CD4-positive, alpha-beta memory T cell (primary cell): ENCODE measurements at regions of chr21 and their contacts with region 1.

Region 1: GRCh38 chr21:36260030-36260787 is 59.8 kb upstream of the MORC3 start:
- DNase-seq: peak; percentile 58 to 72 (median 67)
- H3K4me3 ChIP-seq: peak overlapping the region; percentile 30 to 61
- H3K4me3 Mint-ChIP-seq: peak overlapping the region; percentile 76 to 87 (median 86)
- H3K27ac ChIP-seq: peak overlapping the region; percentile 44
- H3K27ac Mint-ChIP-seq: peak overlapping the region; percentile 57 to 95 (median 90)
- H3K4me1 ChIP-seq: peaks cover 12% of the 10 kb centered on the region
- H3K4me1 Mint-ChIP-seq: peaks cover 10 to 17% (median 15%) of the 10 kb centered on the region in 4 donors
- H3K27me3 ChIP-seq: no peaks in the 10 kb centered on the region
- H3K27me3 Mint-ChIP-seq: no peaks in the 10 kb centered on the region

Region 2: GRCh38 chr21:36288651-36289243 is 28.5 kb after region 1 on chr21:
- CTCF ChIA-PET with region 1: interaction called, 19 read pairs
- POLR2A ChIA-PET with region 1: interaction called, 6 read pairs
- intact Hi-C with region 1: loop called (anchors 1 kb)
- DNase-seq: peak in 4 of 5 donors; percentile 59 to 72 (median 62)
- H3K4me3 ChIP-seq: peak overlapping the region in 1 of 2 donors; percentile 11
- H3K4me3 Mint-ChIP-seq: peak overlapping the region; percentile 65 to 89 (median 80)
- H3K27ac ChIP-seq: peak overlapping the region; percentile 77
- H3K27ac Mint-ChIP-seq: peak overlapping the region; percentile 95 to 99 (median 96)
- H3K4me1 ChIP-seq: peaks cover 26% of the 10 kb centered on the region
- H3K4me1 Mint-ChIP-seq: peaks cover 18 to 29% (median 24%) of the 10 kb centered on the region in 4 donors
- H3K27me3 ChIP-seq: no peaks in the 10 kb centered on the region
- H3K27me3 Mint-ChIP-seq: peaks cover 0 to 1% of the 10 kb centered on the region in 2 donors

Region 3: DNA sequence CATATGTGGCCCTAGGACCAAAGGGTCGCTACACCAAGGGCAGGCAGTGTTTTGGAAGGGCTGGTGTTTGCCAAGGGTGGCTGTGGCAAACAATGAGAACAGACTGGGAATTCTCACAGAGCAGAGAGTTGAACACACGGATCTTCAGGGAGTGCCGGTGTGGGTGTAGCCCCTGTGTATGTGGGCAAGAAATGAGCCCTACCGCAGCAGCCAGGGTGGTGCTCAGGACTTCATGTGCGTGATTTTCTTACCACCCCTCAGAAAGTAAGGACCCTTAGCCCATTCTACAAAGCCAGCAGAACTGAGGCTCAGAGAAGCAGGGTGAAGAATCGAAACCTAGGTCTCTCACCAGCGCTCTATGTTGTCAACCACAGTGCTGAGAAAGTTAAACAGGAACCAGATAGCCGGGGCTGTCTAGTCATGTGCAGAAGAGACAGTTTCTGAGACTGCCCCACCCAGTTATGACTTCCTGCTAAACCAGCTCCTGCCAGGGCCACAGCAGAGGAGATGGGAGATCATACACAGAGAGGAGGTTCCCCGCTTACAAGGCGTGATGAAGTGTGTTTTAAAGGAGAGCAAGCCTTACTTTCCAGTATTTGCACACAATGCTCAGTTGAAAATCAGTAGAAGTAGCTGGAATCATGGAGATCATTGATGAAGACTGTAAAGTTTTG is 37.8 kb after region 1 on chr21:
- CTCF ChIA-PET with region 1: interaction called, 13 read pairs
- POLR2A ChIA-PET with region 1: interaction called, 5 read pairs
- intact Hi-C with region 1: no loop called
- DNase-seq: peak; percentile 81 to 91 (median 84)
- H3K4me3 ChIP-seq: peak overlapping the region; percentile 17 to 52
- H3K4me3 Mint-ChIP-seq: peak overlapping the region; percentile 77 to 89 (median 84)
- H3K27ac ChIP-seq: peak overlapping the region; percentile 79
- H3K27ac Mint-ChIP-seq: peak overlapping the region; percentile 89 to 99 (median 96)
- H3K4me1 ChIP-seq: peaks cover 37% of the 10 kb centered on the region
- H3K4me1 Mint-ChIP-seq: peaks cover 26 to 40% (median 34%) of the 10 kb centered on the region in 4 donors
- H3K27me3 ChIP-seq: no peaks in the 10 kb centered on the region
- H3K27me3 Mint-ChIP-seq: no peaks in the 10 kb centered on the region

Region 4: DNA sequence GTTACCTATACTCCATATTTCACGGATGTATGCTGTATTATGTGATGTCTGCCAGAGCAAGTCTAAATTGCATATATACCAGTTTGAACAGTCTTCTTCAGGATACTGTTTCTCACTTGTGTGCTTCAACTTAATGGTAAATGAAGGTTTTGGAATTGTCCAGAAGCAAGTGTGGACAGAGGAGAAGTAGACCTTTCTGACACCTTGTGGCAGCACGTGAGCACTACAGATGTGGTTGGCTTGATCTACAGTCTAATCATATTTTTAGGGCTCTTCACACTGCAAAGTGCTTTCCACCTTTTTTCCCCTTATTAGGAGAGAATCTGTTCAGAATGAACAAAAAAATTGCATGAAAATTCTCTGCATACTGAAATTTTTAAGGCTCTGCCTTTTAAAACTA is 70.7 kb after region 1 on chr21:
- CTCF ChIA-PET with region 1: interaction called, 28 read pairs
- POLR2A ChIA-PET with region 1: interaction called, 3 read pairs
- intact Hi-C with region 1: loop called (anchors 1 kb)
- DNase-seq: peak; percentile 43 to 61 (median 53)
- H3K4me3 ChIP-seq: no peak overlapping the region
- H3K4me3 Mint-ChIP-seq: peak overlapping the region in 2 of 8 donors; percentile 0 to 61
- H3K27ac ChIP-seq: no peak overlapping the region
- H3K27ac Mint-ChIP-seq: peak overlapping the region in 6 of 7 donors; percentile 58 to 75 (median 70)
- H3K4me1 ChIP-seq: peaks cover 53% of the 10 kb centered on the region
- H3K4me1 Mint-ChIP-seq: peaks cover 38 to 58% (median 47%) of the 10 kb centered on the region in 4 donors
- H3K27me3 ChIP-seq: no peaks in the 10 kb centered on the region
- H3K27me3 Mint-ChIP-seq: no peaks in the 10 kb centered on the region